Aorta (tissue), 5 donors: ENCODE measurements at regions of chr3 and their contacts with region 1.

Region 1: DNA sequence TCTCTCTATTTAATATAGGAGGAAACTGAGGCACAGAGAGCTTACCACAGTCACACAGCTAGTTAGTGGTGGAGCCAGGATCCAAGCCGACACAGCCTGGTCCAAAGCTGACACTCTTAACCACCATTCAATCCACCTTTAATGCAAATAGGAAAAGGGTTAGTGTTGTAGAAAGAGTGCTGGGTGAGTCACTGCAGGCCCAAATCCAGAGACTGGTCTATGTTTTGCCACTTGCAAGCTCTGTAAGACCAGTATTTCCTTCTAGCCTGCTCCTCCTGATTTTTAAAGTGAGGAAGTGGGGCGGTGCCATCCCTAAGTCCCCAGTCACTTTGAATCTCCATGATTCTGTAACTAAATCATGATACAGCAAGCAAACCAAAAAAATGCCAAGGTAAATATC is 111.0 kb downstream of the MECOM start:
- DNase-seq: no peak
- ATAC-seq: no peak
- H3K4me3 ChIP-seq: no peak overlapping the region
- H3K27ac ChIP-seq: no peak overlapping the region
- H3K4me1 ChIP-seq: peaks cover 4 to 14% of the 10 kb centered on the region in 2 donors
- H3K27me3 ChIP-seq: no peaks in the 10 kb centered on the region

Region 2: GRCh38 chr3:169149349-169149890 is 403.1 kb before region 1 on chr3:
- intact Hi-C with region 1: no loop called
- DNase-seq: peak; percentile 86 to 94
- ATAC-seq: peak; percentile 90
- H3K4me3 ChIP-seq: peak overlapping the region; percentile 25 to 65
- H3K27ac ChIP-seq: peak overlapping the region in 1 of 2 donors; percentile 38
- H3K4me1 ChIP-seq: peaks cover 0 to 2% of the 10 kb centered on the region in 2 donors
- H3K27me3 ChIP-seq: no peaks in the 10 kb centered on the region

Region 3: DNA sequence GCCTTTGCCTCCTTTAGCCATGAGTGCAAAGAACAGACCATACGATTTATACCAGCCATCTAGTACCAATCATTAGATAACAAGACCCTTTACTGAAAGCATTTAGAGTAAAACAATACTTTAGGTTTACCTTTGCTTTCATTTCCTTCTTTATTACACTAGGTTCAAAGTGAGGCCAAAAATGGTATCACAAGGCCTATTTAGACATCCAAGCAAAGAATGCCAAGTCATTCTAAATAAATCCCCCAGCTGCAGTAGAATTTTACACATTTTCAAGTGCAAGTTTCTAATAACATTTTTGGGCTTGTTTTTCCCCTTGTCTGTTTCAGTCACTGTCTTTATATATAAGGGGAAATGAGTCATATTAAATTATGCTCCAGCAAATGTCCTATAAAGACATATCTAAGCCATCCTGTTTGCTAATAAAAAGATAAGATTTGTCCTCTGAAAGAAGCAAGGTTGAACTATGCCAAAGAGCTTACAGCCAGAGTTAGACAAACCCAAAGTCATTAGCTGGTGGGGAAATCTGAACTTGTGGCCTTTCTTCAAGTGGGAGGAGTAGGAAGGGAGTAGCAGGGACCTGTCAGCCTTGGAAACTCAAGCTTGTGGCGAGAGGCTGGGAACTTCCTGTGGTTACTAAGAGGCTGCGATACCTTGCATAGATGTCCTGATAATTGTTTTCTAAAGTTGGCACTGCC is 121.7 kb before region 1 on chr3:
- intact Hi-C with region 1: no loop called
- DNase-seq: no peak
- ATAC-seq: peak; percentile 41
- H3K4me3 ChIP-seq: no peak overlapping the region
- H3K27ac ChIP-seq: peak overlapping the region; percentile 43 to 51
- H3K4me1 ChIP-seq: peaks cover 0 to 5% of the 10 kb centered on the region in 2 donors
- H3K27me3 ChIP-seq: no peaks in the 10 kb centered on the region

Region 4: GRCh38 chr3:169575373-169575772 is 22.8 kb after region 1 on chr3:
- intact Hi-C with region 1: loop called in 1 of 2 experiments (anchors 1 kb)
- DNase-seq: no peak
- ATAC-seq: peak; percentile 56
- H3K4me3 ChIP-seq: peak overlapping the region in 1 of 2 donors; percentile 34
- H3K27ac ChIP-seq: peak overlapping the region in 1 of 2 donors; percentile 54
- H3K4me1 ChIP-seq: peaks cover 5 to 6% of the 10 kb centered on the region in 2 donors
- H3K27me3 ChIP-seq: no peaks in the 10 kb centered on the region